ENCODE measurements at regions of chr3 and their contacts with region 1.

Region 1: DNA sequence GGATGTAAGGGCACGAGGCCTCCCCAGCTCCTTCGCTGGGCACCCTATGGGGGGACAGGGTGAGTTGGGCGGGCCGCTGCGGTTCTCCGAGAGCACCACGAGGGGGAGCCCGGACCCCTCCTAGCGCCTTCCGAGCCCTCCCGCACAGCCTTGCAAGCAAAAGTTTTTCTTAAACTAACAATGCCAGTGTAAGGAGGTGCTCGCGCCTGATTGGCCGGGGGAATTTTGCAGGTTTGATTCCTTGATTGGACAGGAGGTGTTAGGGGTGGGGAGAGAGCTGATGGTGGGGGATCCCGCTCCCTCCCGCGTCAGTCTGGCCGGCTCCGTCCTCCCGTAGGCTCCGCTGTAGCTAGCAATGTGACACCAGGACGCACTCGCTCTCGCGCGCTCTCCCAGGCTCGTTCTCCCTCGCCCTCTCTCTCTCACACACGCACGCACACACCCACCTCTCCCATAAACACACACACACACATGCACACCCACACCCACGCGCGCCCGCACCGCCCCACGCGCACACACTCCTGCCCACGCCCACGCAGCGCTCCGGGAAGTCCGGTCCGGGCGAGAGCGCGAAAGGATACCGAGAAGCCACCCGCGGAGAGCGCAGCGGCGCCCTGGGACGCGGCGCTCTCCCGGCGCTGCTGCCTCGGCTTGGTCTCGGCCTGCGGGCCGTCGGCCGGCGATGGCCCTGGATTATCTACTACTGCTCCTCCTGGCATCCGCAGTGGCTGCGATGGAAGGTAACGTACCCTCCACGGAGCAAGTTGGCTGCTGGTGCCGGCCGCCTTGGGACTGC is at the start of gene EPHB1:
- DNase-seq: peak; percentile 78 to 98 (median 89)

Region 2: DNA sequence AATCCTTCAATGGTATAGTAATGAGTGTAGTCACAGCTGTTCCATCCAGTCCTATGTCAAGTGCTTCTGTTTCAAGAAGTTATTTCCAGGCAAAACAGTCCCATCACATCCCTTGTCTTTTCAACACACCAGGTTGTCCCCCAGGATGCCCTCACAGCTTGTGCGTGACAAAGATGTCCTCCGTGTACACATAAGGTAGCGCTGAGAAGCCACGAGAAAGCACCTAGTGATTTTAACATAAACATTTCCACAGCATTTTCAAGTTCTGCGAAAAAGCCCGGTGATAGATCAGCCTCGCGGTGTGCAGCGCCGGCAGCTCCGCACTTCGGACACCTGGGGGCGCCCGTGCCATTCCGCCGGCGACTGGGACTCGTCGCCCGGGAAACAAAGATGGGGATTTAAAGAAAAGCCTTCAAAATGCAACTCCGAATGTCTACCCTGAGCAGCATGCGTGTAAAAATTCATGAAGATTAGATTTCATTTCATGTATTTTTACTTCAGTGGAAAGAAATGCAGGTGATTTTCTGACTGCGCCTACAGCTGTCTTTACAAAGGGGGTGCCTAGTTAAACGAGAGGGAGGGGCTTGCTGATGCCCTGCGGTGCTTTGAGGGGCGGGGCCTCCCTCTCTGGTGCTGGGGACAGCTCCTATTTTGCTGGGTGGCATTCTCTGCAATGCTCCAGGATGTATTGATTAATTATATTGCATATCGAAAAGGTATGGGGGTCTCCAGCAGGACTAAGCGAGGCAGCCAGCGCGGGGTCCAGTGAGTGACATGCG is 194.3 kb before region 1 on chr3:
- intact Hi-C with region 1: loop called (anchors 1 kb)
- DNase-seq: peak; percentile 56 to 97 (median 80)

Region 3: DNA sequence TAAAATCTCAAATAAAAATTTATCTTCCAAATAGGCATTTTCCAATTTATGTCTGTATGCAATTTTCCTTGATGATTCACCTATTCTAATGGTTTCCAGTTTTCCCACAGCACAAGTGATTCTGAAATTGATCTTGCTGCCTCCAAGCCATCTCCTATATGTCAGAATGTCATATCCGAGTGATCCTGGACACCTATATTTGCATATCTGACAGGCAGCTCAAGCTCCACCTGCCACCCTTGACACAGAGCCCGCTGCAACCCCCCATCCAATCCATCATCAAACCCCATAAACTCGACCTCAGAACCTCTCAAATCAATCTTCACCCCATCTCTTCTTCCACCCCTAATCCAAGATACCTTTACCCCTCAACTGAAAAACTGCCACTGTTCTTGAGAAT is 579.4 kb after region 1 on chr3:
- intact Hi-C with region 1: loop called (anchors 10 kb)
- DNase-seq: no peak

Region 4: DNA sequence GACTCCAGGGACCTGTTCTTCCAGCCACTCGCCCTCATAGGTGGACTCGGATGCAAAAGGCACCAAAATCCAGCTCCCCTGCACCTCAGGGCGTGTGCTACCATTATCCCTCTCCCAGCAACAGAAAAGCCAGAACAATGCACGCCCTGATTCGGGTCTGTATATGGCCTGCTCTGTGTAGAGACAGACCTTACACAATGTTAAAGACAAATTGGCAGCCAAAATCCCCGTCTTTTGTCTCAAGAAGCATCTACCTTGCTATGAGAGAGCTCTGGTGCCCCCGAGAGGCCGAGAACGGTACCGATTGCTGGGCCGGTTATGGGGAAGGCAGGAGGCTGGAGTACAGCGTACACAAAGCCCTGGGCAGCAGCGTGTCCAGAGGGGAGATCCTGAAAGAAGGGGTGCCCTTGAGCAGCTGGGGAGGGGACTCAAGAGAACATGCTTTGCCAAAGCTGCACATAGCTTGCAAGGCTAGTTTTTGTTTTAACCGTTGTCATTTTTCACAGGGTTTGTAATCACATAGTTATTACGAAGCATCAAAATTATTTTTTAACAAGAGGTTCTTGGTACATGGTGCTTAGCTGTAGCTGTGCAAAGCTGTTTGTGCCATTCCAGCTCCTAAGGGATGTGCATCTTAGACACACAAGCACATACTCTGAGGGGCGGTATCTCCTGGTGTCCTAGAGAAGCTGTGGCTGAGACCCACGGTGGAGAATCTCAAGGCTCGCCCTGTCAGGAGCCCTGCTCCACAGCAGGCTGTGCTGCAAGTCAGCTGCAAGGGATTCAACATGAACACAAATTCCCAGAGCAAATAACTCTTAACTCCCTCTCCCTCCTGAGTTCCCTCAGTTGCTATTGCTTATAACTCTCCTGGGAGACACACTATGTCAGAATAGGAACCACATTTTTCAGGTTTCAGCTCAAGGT is 708.9 kb after region 1 on chr3:
- intact Hi-C with region 1: loop called (anchors 2 kb)
- DNase-seq: peak; percentile 45 to 97 (median 85)

Region 5: GRCh38 chr3:135895106-135895733 is 1100.1 kb after region 1 on chr3:
- intact Hi-C with region 1: loop called (anchors 2 kb)
- DNase-seq: peak; percentile 58 to 95 (median 80)

Measured in posterior cingulate gyrus (tissue), 11 donors.